Common myeloid progenitor, CD34-positive (primary cell): ENCODE measurements at regions of chr15 and their contacts with region 1.

Region 1: GRCh38 chr15:99371180-99372103 is 120.2 kb downstream of the LRRC28 start:
- DNase-seq: peak; percentile 35 to 67 (median 62)
- H3K4me3 ChIP-seq: peak overlapping the region in 1 of 7 experiments; percentile 4
- H3K27ac ChIP-seq: peak overlapping the region in 1 of 2 experiments; percentile 65
- H3K4me1 ChIP-seq: peaks cover 11 to 19% (median 14%) of the 10 kb centered on the region in 4 experiments
- H3K27me3 ChIP-seq: no peaks in the 10 kb centered on the region

Region 2: GRCh38 chr15:99282121-99282520 is 89.3 kb before region 1 on chr15:
- CTCF ChIA-PET with region 1: interaction called, 18 read pairs
- POLR2A ChIA-PET with region 1: no interaction called
- DNase-seq: no peak
- H3K4me3 ChIP-seq: no peak overlapping the region
- H3K27ac ChIP-seq: no peak overlapping the region
- H3K4me1 ChIP-seq: peaks cover 3 to 5% (median 3%) of the 10 kb centered on the region in 4 experiments
- H3K27me3 ChIP-seq: no peaks in the 10 kb centered on the region

Region 3: GRCh38 chr15:99343881-99344551 is 27.4 kb before region 1 on chr15:
- CTCF ChIA-PET with region 1: interaction called, 14 read pairs
- POLR2A ChIA-PET with region 1: no interaction called
- DNase-seq: no peak
- H3K4me3 ChIP-seq: no peak overlapping the region
- H3K27ac ChIP-seq: no peak overlapping the region
- H3K4me1 ChIP-seq: no peaks in the 10 kb centered on the region
- H3K27me3 ChIP-seq: no peaks in the 10 kb centered on the region